MCF 10A (cell line): ENCODE measurements at regions of chr17 and their contacts with region 1.

Region 1: DNA sequence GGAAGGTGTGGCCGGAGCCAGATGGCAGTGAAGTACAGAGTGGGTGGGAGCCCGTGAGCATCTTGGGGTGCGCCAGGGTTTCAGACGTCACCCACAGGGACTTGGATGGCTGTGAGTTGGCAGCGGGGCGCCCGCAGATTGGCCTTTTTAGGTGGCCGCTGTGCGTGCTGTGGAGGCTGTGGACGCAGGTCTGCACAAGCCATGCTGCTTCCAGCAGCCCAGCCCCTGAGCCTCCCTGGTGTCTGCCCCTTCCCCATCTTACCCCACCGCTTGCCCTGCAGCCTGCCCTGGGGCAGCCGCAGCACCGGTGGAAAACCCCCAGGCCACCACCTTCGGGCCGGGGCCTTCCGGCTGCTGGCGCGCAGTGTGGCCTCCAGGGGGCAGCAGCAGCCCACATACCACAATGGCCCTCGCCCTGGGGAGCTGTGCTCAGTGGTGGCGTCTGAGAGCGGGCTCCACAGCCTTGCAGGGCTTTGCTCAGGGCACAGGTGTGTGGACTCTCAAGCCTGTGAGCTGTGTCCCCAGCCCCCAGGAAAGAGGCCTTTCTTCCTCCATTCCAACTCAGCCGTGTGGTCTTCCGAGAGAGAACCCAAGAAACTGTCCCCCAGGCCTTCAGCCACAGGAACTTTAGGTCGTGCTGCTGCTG is 11.8 kb downstream of the ENDOV start:
- DNase-seq: peak; percentile 66
- H3K4me3 Mint-ChIP-seq: no peak overlapping the region
- H3K27ac Mint-ChIP-seq: no peak overlapping the region
- H3K4me1 Mint-ChIP-seq: no peaks in the 10 kb centered on the region
- H3K27me3 Mint-ChIP-seq: no peaks in the 10 kb centered on the region
- CTCF ChIP-seq: peak; percentile 96

Region 2: GRCh38 chr17:80219013-80219762 is 207.6 kb before region 1 on chr17:
- CTCF ChIA-PET with region 1: no interaction called
- POLR2A ChIA-PET with region 1: no interaction called
- intact Hi-C with region 1: no loop called
- DNase-seq: peak; percentile 84
- H3K4me3 Mint-ChIP-seq: peak overlapping the region; percentile 94
- H3K27ac Mint-ChIP-seq: peak overlapping the region; percentile 84
- H3K4me1 Mint-ChIP-seq: peaks cover 15% of the 10 kb centered on the region
- H3K27me3 Mint-ChIP-seq: no peaks in the 10 kb centered on the region
- CTCF ChIP-seq: no peak

Region 3: GRCh38 chr17:80414803-80415625 is 11.8 kb before region 1 on chr17 and contains the start of gene ENDOV:
- CTCF ChIA-PET with region 1: interaction called, 4 read pairs
- POLR2A ChIA-PET with region 1: interaction called, 10 read pairs
- intact Hi-C with region 1: no loop called
- DNase-seq: peak; percentile 92
- H3K4me3 Mint-ChIP-seq: peak within 1 kb of the TSS; percentile 72
- H3K27ac Mint-ChIP-seq: peak within 1 kb of the TSS; percentile 96
- H3K4me1 Mint-ChIP-seq: peaks cover 30% of the 10 kb centered on the region
- H3K27me3 Mint-ChIP-seq: no peaks in the 10 kb centered on the region
- CTCF ChIP-seq: no peak
- total RNA-seq, gene ENDOV: 28.0 and 34.4 TPM in 2 replicates

Region 4: DNA sequence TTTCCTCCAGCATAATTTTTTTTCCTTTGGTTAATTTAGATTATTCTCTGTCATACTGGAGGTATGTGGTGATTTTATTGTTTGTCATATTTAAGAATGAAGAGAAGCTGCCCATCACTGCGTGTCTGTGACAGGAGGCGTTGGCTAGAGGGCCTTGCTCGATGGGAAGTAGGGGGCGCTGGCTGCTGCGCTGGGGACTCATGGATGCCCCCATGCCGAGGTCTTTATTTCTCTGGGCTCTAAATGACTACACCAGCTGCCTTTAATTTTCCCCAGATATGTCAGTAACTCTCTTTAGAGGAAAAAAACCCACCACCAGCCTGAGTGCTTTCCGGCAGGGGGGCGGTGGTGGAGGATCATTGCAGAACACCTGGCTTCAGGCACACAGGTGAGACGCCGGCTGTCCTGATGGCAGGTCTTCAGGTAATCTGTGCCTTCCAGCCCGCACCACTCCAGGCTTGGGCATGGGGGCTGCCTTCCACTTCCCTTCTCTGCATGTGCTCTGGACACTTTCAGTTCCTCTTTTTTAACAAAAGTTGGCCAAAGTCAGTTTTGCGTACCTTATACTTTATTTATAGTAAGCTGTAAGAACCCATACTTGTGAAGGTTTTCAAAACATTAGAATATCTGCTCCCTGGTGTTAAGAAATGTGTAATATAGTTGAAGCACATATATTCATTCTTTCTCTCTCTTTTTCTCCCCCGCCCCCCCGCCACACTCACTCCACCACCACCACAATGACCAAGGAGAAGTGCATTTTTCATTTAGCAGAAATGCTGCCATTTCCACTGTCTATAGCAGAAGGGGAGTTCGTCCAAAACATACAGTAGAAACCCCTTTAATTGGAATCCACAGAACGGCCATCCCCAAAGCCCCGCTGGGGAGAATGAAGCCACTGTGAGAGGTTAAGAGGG is 310.6 kb after region 1 on chr17:
- CTCF ChIA-PET with region 1: no interaction called
- POLR2A ChIA-PET with region 1: no interaction called
- intact Hi-C with region 1: no loop called
- DNase-seq: no peak
- H3K4me3 Mint-ChIP-seq: no peak overlapping the region
- H3K27ac Mint-ChIP-seq: no peak overlapping the region
- H3K4me1 Mint-ChIP-seq: no peaks in the 10 kb centered on the region
- H3K27me3 Mint-ChIP-seq: no peaks in the 10 kb centered on the region
- CTCF ChIP-seq: no peak

Region 5: DNA sequence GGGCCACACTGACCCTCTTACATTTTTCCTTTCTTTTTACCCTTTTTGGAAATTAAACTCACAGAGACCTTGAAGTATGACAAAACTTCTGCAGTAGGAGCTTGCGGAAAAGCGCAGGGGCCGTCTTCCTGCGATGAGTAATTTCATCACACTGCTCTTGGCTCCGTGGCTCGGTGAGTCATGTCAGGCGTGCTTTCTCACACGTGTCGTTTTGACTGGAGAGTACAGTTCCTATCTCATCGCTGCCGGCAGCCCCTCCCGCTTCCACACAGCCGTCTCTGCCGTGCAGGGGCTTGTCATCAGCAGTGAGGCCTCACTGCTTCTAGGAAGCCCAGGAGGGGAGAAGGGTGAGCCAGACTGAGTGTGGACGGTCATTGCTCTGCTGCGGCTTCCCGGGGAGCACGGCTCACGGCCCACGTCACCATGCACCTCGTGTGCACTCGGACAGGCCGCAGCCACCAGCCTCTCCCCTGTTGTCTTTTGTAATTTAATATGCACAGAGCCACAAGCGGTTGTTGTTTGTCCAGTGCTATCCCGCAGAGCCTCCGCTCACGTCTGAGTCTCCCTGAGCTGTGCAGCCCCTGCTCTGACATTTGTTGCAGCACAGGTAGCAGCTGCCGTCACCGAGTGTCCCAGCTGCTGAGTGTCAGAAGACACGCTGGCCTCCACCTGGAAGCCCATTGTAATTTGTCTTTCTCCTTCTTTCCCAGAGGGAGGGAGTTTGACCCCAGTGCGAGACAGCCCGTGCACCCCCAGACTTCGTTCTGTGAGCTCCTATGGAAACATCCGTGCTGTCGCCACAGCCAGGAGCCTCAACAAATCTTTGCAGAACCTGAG is 465.4 kb after region 1 on chr17:
- CTCF ChIA-PET with region 1: interaction called, 3 read pairs
- POLR2A ChIA-PET with region 1: no interaction called
- intact Hi-C with region 1: loop called (anchors 10 kb)
- DNase-seq: peak; percentile 98
- H3K4me3 Mint-ChIP-seq: peak overlapping the region; percentile 62
- H3K27ac Mint-ChIP-seq: peak overlapping the region; percentile 92
- H3K4me1 Mint-ChIP-seq: peaks cover 31% of the 10 kb centered on the region
- H3K27me3 Mint-ChIP-seq: no peaks in the 10 kb centered on the region
- CTCF ChIP-seq: peak; percentile 32

Region 6: DNA sequence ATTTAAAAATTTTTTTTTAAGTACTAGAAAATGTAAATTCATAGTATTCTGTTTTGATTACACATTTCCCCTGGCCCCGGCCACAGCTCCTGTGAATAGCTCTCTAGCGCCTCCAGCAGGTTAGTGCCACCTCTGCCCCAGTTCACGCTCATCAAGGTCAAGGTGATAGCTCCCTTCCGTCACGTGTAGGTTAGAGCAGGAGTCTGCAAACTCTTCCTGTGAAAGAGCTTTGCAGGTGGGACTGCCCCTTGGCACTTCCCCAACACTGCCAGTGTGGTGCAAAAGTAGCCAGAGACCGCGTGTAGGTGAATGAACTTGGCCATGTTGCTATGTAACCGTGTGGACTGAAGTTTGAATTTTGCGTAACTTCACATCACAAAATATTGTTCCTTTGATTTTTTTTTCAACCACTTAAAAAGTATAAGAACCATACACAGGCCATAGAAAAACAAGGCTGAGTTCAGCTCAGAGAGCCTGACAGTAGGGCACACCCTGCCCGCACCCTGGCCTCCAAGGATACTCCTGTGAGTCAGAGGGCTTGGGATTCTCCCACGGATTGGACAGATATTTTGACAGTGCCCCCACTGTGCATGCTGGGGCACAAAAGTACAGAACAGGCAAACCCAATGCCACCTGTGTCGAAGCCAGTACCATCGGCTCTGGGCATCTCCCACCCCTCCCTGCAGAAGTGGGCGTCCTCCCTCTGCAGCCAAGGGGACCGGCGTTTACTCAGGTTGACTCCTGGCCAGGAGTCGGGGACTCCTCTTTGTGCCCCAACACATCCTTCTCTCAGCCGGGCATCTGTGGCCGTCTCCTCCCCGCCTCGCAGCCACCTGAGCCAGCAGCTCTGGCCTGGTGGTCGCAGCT is 472.8 kb after region 1 on chr17:
- CTCF ChIA-PET with region 1: interaction called, 10 read pairs
- POLR2A ChIA-PET with region 1: no interaction called
- intact Hi-C with region 1: loop called (anchors 10 kb)
- DNase-seq: peak; percentile 85
- H3K4me3 Mint-ChIP-seq: peak overlapping the region; percentile 12
- H3K27ac Mint-ChIP-seq: peak overlapping the region; percentile 39
- H3K4me1 Mint-ChIP-seq: peaks cover 36% of the 10 kb centered on the region
- H3K27me3 Mint-ChIP-seq: no peaks in the 10 kb centered on the region
- CTCF ChIP-seq: peak; percentile 88